Ascending aorta (tissue), 2 donors: ENCODE measurements at regions of chr20 and their contacts with region 1.

Region 1: DNA sequence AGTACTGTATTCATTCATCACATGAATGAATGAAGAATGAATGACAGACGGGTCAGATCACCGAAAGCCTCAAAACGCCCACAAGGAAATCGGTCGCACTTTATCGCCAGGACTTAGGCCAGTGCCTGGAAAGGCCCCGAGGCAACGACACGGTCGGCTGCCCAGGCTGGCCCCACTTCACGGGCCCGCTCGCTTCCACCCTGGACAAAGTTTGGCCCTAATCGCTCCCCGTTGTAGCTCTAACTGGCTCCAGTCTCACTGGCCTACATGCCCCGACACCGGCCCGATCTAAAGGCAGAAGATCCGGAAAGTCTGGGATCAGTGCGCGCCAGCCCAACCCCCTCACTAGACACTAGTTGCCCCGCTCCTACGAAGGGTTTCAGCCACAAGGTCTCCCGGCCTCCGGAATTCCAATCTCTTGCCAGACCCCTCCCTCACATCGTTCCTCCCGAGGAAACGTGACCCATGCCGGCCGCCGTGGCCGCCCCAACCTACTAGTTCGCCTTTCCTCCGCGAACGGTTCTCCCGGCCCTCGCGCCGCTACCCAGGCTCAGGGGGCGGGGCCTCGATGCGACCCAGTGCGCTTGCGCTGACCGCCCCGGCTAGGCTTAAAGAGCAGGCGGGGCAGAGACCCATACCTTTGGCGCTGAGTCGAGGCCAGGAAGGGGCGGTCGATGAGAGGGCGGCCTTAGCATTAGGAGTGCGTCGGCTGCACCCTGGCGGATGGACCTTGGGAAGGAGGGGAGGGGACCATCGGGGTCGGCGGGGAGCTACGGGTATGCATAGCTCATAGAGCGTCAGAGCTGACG is at the starts of genes GSS and MYH7B:
- DNase-seq: peak; percentile 93 to 99
- H3K4me3 ChIP-seq: peak within 1 kb of the TSS; percentile 60 to 74
- H3K27ac ChIP-seq: peak within 1 kb of the TSS; percentile 89 to 91
- H3K4me1 ChIP-seq: peaks cover 4 to 5% of the 10 kb centered on the region in 2 donors
- H3K27me3 ChIP-seq: no peaks in the 10 kb centered on the region
- CTCF ChIP-seq: peak; percentile 49 to 85 (median 77)
- total RNA-seq, gene GSS: 40.7 TPM
- total RNA-seq, gene MYH7B: 4.7 TPM

Region 2: GRCh38 chr20:34538671-34539123 is 416.7 kb before region 1 on chr20:
- intact Hi-C with region 1: no loop called
- DNase-seq: no peak
- H3K4me3 ChIP-seq: no peak overlapping the region
- H3K27ac ChIP-seq: no peak overlapping the region
- H3K4me1 ChIP-seq: no peaks in the 10 kb centered on the region
- H3K27me3 ChIP-seq: no peaks in the 10 kb centered on the region
- CTCF ChIP-seq: peak; percentile 37 to 63 (median 59)

Region 3: DNA sequence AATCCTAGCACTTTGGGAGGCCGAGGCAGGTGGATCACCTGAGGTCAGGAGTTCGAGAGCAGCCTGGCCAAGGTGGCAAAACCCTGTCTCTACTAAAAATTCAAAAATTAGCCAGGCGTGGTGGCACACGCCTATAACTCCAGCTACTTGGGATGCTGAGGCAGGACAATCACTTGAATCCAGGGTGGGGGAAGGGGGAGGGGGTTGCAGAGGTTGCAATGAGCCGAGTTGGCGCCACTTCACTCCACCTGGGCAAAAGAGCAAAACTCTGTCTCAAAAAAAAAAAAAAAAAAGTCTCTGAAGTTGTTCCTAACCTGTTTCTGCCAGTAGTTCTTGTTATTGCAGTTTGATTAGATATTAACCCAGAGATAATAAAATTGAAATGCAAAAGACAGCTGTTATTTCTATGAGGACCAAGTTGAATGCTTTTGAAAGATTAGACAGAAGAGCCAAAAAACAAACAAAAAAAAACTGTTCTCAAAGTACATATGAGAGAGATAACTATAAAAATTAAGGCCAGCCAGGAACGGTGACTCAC is 301.2 kb before region 1 on chr20:
- intact Hi-C with region 1: no loop called
- DNase-seq: no peak
- H3K4me3 ChIP-seq: no peak overlapping the region
- H3K27ac ChIP-seq: no peak overlapping the region
- H3K4me1 ChIP-seq: no peaks in the 10 kb centered on the region
- H3K27me3 ChIP-seq: no peaks in the 10 kb centered on the region
- CTCF ChIP-seq: no peak

Region 4: GRCh38 chr20:34825530-34826362 is 129.7 kb before region 1 on chr20 and contains the start of gene NCOA6:
- intact Hi-C with region 1: loop called (anchors 5 kb)
- DNase-seq: peak; percentile 30 to 90
- H3K4me3 ChIP-seq: peak within 1 kb of the TSS; percentile 89 to 99
- H3K27ac ChIP-seq: peak within 1 kb of the TSS; percentile 62 to 70
- H3K4me1 ChIP-seq: peaks cover 0 to 13% of the 10 kb centered on the region in 2 donors
- H3K27me3 ChIP-seq: no peaks in the 10 kb centered on the region
- CTCF ChIP-seq: no peak
- total RNA-seq, gene NCOA6: 21.6 TPM

Region 5: GRCh38 chr20:34907616-34908469 is 47.6 kb before region 1 on chr20:
- intact Hi-C with region 1: no loop called
- DNase-seq: peak in 1 of 2 donors; percentile 79
- H3K4me3 ChIP-seq: no peak overlapping the region
- H3K27ac ChIP-seq: peak overlapping the region; percentile 77 to 82
- H3K4me1 ChIP-seq: peaks cover 6 to 28% of the 10 kb centered on the region in 2 donors
- H3K27me3 ChIP-seq: no peaks in the 10 kb centered on the region
- CTCF ChIP-seq: no peak

Region 6: GRCh38 chr20:34922654-34923424 is 32.6 kb before region 1 on chr20:
- intact Hi-C with region 1: loop called (anchors 2 kb)
- DNase-seq: peak in 1 of 2 donors; percentile 79
- H3K4me3 ChIP-seq: no peak overlapping the region
- H3K27ac ChIP-seq: peak overlapping the region; percentile 15 to 78
- H3K4me1 ChIP-seq: peaks cover 0 to 19% of the 10 kb centered on the region in 2 donors
- H3K27me3 ChIP-seq: no peaks in the 10 kb centered on the region
- CTCF ChIP-seq: no peak

Region 7: GRCh38 chr20:34983995-34984735 is 28.7 kb after region 1 on chr20:
- intact Hi-C with region 1: no loop called
- DNase-seq: no peak
- H3K4me3 ChIP-seq: no peak overlapping the region
- H3K27ac ChIP-seq: no peak overlapping the region
- H3K4me1 ChIP-seq: no peaks in the 10 kb centered on the region
- H3K27me3 ChIP-seq: no peaks in the 10 kb centered on the region
- CTCF ChIP-seq: no peak